HEK293 (cell line): ENCODE measurements at regions of chr20 and their contacts with region 1.

Region 1: DNA sequence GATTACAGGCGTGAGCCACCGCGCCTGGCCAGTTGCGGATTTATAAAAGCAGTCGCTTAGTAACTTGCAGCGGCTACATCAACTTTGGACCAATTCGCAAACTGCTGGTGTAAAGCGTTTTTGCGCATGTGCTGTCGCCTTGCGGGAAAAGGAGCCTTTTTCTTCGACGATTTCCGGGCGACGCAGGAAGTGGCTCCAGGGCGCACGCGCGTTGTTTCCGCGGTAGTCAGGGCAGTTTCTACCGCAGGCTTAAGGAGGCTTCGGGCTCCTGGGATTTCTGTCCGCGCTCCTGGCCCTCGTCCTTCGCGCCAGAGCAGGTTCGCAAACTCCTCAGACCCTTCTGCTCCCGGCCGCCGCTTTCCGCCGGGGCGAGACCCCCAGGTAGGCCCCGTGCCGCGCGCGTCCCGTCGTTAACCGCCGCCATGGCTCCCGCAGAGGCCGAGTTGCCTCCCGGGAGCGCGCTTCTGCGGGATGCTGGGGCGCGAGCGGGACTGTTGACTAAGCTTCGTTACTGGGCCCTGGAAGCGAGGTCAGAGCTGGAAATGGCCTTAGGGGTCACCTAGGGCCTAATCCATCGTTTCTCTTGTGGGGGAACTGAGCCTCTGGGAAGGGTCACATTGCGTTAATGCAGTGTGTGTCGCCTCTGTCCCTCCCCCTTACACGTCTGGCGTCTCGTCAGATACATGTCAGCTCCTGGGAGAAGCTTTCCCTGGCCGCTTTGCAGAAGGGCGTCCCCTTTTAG is at the start of gene RAE1:
- H3K4me3 ChIP-seq: peak within 1 kb of the TSS; percentile 91
- H3K27ac ChIP-seq: peak within 1 kb of the TSS; percentile 85
- H3K4me1 ChIP-seq: no peaks in the 10 kb centered on the region
- CTCF ChIP-seq: no peak

Region 2: DNA sequence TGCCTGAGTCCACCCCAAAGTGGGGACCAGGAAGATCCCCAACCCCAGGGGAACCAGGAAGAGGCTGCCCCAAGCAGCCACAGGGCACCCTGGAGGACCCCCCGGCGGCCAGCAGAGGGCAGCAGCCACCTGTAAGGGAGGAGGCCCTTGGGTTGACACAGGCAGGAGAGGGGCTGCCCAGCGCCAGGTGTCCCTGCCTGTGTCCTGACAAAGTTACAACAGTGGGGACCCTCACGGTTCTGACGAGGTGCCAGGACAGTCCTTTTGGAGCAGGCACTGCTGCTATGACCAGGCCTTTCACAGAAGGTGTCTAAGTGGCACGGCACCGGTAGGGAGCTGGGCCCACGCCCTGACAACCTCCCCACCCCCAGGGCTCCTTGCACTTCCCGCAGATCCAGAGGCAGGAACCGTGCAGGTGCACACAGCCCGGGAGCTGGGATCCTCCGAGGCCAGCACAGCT is 261.5 kb before region 1 on chr20:
- CTCF ChIA-PET with region 1: interaction called, 165 read pairs
- POLR2A ChIA-PET with region 1: no interaction called
- H3K4me3 ChIP-seq: no peak overlapping the region
- H3K27ac ChIP-seq: no peak overlapping the region
- H3K4me1 ChIP-seq: no peaks in the 10 kb centered on the region
- CTCF ChIP-seq: peak; percentile 79

Region 3: DNA sequence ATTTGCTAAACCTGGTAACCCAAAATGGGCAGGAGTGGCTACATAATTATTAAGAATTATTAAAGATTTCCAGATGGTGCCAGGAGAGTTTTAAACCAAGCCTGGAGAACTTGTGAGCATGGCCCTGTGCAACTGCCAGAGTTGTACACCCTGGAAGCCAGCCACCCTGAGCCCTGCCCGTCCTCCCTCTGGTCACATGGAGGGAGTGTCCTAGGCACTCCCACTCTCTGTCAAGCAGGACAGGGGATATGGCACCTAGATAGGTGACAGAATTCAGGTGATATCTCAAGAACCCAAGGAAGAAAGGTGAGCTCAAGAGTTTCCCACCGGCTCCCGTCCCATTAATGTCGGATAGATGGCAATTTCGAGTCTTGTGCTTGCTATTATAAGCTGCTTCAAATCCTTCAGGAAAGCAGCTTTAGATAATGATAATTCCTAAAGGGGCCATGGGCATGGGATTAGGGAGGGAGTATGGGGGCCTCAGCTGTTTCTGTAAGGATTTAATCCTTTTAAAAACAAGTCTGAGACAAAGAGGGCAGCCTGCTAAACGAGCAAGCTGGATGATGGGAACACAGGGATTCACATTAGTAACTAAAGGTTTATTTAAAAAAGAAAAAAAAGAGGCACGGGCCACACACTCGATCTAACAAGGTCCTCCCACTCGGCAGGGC is 253.8 kb before region 1 on chr20:
- CTCF ChIA-PET with region 1: interaction called, 165 read pairs
- POLR2A ChIA-PET with region 1: no interaction called
- H3K4me3 ChIP-seq: no peak overlapping the region
- H3K27ac ChIP-seq: no peak overlapping the region
- H3K4me1 ChIP-seq: no peaks in the 10 kb centered on the region
- CTCF ChIP-seq: no peak

Region 4: GRCh38 chr20:57335392-57335791 is 15.8 kb before region 1 on chr20:
- CTCF ChIA-PET with region 1: interaction called, 74 read pairs
- POLR2A ChIA-PET with region 1: no interaction called
- H3K4me3 ChIP-seq: no peak overlapping the region
- H3K27ac ChIP-seq: no peak overlapping the region
- H3K4me1 ChIP-seq: no peaks in the 10 kb centered on the region
- CTCF ChIP-seq: no peak